ENCODE measurements at regions of chr7 and their contacts with region 1.

Region 1: DNA sequence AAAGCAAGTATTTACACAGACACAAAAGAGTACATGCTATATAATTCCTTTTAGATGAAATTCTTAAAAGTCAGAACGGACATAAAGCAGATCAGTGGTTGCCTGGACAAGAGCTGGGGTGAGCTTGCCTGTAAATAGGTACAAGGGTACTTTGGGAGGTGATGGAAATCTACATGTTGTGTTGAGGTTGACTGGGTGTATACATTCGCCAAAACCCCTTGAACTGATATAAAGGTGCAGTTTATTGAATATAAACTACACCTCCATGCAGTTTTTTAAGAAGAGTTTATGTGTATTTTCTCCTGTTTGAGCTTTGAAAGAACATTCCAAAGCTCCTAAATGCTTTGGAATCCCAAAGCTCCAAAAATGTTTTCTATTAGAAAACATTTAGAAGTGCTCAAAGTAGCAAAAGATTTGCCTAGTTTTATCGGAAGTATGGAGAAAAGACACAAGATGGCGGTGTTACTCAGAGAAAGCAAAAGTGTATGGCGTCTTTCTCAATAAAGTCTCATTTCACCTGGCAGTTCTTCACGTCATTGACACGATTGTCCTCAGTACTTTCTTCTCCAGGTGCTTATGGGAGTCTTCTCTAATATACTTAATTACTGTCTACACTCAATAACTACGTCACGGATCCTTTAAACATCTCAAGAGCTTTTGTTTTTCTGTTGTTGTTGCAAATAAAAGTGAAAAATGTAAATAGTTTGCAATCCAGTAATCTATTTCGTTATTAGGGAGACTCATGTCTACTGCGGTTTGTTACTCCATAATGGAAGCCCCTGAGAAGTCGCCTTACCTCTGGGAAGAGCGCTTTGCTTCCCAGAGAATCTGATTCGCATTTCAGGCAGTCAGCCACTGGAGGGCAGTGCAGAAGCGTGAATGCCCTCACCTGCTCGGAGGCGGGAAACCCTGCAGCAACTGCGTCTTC is 14.7 kb upstream of the SEC61G start:
- DNase-seq: no peak
- H3K4me3 ChIP-seq: peak overlapping the region; percentile 13 to 46 (median 36)
- H3K27ac ChIP-seq: peak overlapping the region in 2 of 4 donors; percentile 9 to 60
- H3K4me1 ChIP-seq: peaks cover 0 to 10% (median 0%) of the 10 kb centered on the region in 3 donors
- H3K27me3 ChIP-seq: peaks cover 0 to 25% (median 0%) of the 10 kb centered on the region in 4 donors
- CTCF ChIP-seq: peak; percentile 64 to 95 (median 86)
- POLR2A ChIP-seq: no peak

Region 2: GRCh38 chr7:54591404-54592386 is 182.0 kb before region 1 on chr7:
- intact Hi-C with region 1: no loop called
- DNase-seq: no peak
- H3K4me3 ChIP-seq: no peak overlapping the region
- H3K27ac ChIP-seq: no peak overlapping the region
- H3K4me1 ChIP-seq: no peaks in the 10 kb centered on the region
- H3K27me3 ChIP-seq: no peaks in the 10 kb centered on the region
- CTCF ChIP-seq: no peak
- POLR2A ChIP-seq: no peak

Region 3: GRCh38 chr7:55255496-55256435 is 482.0 kb after region 1 on chr7:
- intact Hi-C with region 1: loop called (anchors 2 kb)
- DNase-seq: no peak
- H3K4me3 ChIP-seq: peak overlapping the region; percentile 45 to 74 (median 54)
- H3K27ac ChIP-seq: peak overlapping the region in 3 of 4 donors; percentile 19 to 53 (median 33)
- H3K4me1 ChIP-seq: peaks cover 7 to 21% (median 10%) of the 10 kb centered on the region in 3 donors
- H3K27me3 ChIP-seq: peaks cover 0 to 61% (median 4%) of the 10 kb centered on the region in 4 donors
- CTCF ChIP-seq: peak; percentile 81 to 94 (median 90)
- POLR2A ChIP-seq: no peak

Measured in esophagus squamous epithelium (tissue), 5 donors.